IMR-90 (cell line): ENCODE measurements at regions of chr10 and their contacts with region 1.

Region 1: DNA sequence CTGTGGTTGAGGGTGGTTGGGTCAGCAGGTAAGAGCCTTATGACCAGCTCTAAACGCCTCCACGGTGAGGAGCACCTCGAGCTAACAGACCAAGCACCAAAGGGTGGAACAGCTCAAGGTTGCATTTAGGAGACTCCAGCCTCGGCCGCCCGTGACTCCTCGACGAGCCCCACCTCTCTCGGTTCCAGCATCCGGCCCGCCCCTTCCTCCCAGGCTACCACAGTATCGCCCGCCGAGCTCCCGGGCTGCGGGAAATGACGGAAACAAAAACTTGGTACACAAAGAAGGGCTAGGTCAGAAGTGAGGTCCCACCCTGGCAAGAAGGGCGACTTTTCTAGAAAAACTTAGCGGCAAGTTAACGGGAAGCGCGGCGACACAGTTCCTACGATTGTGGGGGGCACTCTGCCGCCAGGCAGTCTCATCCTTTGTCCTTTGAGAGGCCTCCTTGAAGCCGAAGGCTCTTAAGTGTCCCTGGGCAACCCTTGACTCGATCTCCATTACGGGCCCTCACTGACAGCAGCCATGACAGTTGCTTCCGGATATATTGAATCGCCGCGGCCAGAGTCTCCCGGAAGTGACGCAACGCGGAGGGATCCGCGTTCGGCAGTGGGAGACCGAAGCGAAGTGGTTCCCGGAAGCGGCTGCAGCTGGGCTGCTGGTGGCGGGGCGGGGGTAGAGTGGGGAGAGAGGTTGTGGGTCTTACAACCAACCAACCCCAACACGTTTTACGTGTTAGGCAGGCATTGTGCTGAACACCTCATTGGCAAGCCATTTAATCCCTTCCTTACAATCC is 40.2 kb upstream of the ZNF518A start:
- DNase-seq: peak; percentile 96
- ATAC-seq: peak; percentile 98
- H3K4me3 ChIP-seq: peak overlapping the region; percentile 80
- H3K27ac ChIP-seq: peak overlapping the region; percentile 82
- H3K4me1 ChIP-seq: peaks cover 3% of the 10 kb centered on the region
- H3K27me3 ChIP-seq: no peaks in the 10 kb centered on the region; the same call in 1 of the 2 replicates
- CTCF ChIP-seq: no peak
- POLR2A ChIP-seq: peak; percentile 79
- RAD21 ChIP-seq: no peak; the same call in 1 of the 2 replicates

Region 2: DNA sequence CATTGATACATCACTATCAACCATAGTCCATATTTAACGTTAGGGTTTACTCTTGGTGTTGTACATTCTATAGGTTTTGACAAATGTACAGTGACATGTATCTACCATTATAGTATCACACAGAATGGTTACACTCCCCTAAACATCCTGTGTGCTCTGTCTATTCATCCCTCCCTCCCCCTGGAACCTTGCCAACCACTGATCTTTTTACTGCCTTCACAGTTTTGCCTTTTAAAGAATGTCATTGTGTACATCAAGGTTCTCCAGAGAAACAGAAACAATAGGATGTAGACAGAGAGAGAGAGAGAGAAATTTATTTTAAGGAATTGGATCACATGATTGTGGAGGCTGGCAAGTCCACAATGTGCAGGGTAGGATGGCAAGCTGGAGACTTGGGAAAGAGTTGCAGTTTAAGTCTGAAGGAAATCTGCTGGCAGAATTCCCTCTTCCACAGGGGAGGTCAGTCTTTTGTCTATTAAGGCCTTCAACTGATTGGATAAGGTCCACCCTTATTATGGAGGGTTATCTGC is 91.5 kb before region 1 on chr10:
- CTCF ChIA-PET with region 1: no interaction called
- POLR2A ChIA-PET with region 1: no interaction called
- dilution Hi-C with region 1: no loop called
- in situ Hi-C with region 1: no loop called
- intact Hi-C with region 1: no loop called
- DNase-seq: no peak
- ATAC-seq: no peak
- H3K4me3 ChIP-seq: no peak overlapping the region
- H3K27ac ChIP-seq: no peak overlapping the region
- H3K4me1 ChIP-seq: no peaks in the 10 kb centered on the region
- H3K27me3 ChIP-seq: no peaks in the 10 kb centered on the region
- CTCF ChIP-seq: no peak
- POLR2A ChIP-seq: no peak
- RAD21 ChIP-seq: no peak

Region 3: DNA sequence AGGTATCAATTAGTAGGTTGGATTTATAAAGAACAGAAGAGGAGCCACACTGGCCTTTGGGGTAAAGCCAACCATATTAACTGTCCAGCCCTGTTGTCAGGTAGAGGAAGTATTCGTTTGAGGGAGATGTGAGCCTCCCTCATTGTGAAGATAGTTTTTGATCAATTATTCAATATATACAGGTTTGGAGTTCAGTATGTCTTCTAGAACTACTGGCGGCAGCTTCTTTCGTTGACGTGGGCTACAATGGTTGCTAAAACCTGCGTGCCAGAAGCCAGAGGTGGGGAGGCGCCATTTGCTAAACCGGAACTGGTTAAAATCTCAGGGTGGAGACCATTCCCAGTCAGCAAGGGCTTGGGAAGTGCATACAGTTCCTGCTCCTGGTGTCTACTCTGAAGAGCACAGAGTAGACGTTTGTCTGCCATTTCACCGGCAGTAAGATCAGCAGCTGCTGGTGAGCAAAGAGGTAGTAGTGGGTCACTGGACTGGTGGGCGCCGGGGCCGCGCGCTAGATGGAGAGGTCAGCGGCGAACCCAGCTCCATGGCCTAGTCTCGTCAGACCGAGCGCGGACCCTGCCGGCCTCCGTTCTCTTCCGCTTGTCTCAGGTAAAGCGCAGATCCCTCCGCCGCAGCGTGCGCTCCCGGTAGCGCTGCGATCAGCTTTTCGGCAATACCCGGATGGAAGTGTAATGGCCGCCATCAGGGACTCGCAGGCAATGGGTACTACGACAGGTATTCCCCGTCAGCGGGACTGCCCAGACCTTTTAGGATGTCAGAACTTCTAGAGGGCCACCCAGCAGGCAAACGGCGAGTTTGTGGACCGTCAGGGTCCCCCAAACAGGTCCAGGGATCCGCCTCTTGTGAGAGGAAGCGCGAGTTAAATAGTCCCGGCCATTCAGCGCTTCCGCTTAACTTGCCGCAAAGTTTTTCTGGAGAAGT is 39.8 kb after region 1 on chr10 and contains the start of gene ZNF518A:
- CTCF ChIA-PET with region 1: no interaction called
- POLR2A ChIA-PET with region 1: interaction called, 12 read pairs
- dilution Hi-C with region 1: no loop called
- in situ Hi-C with region 1: loop called (anchors 5 kb)
- intact Hi-C with region 1: loop called (anchors 1 kb)
- DNase-seq: peak; percentile 97
- ATAC-seq: peak; percentile 85
- H3K4me3 ChIP-seq: peak within 1 kb of the TSS; percentile 54
- H3K27ac ChIP-seq: peak within 1 kb of the TSS; percentile 94
- H3K4me1 ChIP-seq: peaks cover under 1% of the 10 kb centered on the region; the same call in 1 of the 2 replicates
- H3K27me3 ChIP-seq: no peaks in the 10 kb centered on the region
- CTCF ChIP-seq: no peak
- POLR2A ChIP-seq: 0 out of 2 replicates have a peak, but pooled peaks have one; percentile 17
- RAD21 ChIP-seq: no peak
- total RNA-seq, gene ZNF518A: 7.9 and 10.0 TPM in 2 replicates

Region 4: GRCh38 chr10:96470116-96470743 is 380.4 kb after region 1 on chr10:
- CTCF ChIA-PET with region 1: no interaction called
- POLR2A ChIA-PET with region 1: no interaction called
- dilution Hi-C with region 1: no loop called
- in situ Hi-C with region 1: no loop called
- intact Hi-C with region 1: no loop called
- DNase-seq: peak; percentile 25
- ATAC-seq: peak; percentile 82
- H3K4me3 ChIP-seq: no peak overlapping the region
- H3K27ac ChIP-seq: no peak overlapping the region
- H3K4me1 ChIP-seq: no peaks in the 10 kb centered on the region
- H3K27me3 ChIP-seq: peaks cover 10% of the 10 kb centered on the region
- CTCF ChIP-seq: peak; percentile 44
- POLR2A ChIP-seq: no peak
- RAD21 ChIP-seq: peak; percentile 29; the same call in 1 of the 2 replicates